ENCODE measurements at regions of chr18 and their contacts with region 1.

Region 1: DNA sequence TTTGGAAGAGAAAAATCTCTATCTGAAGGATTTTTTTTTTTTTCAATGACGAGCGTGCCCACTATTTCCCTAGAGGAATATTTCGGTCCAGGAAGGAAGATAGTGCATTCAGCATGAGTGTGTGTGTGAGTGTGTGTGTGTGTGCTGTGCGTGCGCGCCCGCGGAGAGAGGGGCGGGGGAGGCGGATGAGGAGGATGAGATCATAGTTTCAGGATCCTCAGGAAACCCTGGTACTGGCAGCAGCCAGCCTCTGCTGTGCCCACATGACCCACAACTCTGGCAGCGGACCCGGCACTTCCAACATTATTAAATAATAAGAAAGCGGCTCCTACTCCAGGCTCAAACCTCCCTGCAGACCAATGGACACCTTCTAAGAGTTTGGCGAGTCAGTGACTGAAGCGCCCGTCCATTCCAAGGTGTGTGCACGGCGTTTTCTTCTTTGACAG is 217.0 kb upstream of the DTNA start:
- DNase-seq: peak; percentile 77 to 90 (median 87)
- ATAC-seq: peak; percentile 89 to 90
- H3K4me3 ChIP-seq: peak overlapping the region; percentile 82
- H3K27ac ChIP-seq: peak overlapping the region; percentile 90
- H3K4me1 ChIP-seq: no peaks in the 10 kb centered on the region
- H3K27me3 ChIP-seq: no peaks in the 10 kb centered on the region

Region 2: DNA sequence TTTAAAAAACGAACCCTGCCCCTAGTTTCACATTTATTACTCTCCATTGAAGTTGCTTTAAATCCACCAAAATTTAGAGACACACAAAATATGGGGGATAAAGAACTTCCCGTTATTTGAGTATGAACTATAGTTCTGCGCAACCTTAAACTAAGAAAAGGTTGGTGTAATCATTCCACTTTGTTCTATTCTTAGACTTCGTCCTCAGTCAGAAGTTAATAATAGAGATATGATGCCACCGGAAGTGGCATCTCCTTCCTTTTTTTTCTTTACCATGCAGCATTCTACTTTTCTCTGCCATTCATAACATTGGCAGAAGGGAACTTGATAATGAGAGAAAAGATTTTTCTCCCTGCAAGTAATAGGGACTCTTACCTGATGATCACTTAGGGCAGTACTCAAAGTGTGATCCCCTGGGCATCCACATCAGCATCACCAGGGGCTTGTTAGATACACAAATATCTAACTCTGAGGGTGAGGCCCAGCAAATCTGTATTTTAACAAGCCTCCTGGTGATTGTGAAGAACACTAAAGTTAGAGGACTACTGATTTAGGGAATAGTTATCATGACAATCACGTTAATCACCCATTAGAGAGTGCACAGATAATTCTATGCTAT is 69.2 kb after region 1 on chr18:
- intact Hi-C with region 1: no loop called
- DNase-seq: no peak
- ATAC-seq: peak; percentile 56 to 59
- H3K4me3 ChIP-seq: no peak overlapping the region
- H3K27ac ChIP-seq: peak overlapping the region; percentile 43
- H3K4me1 ChIP-seq: no peaks in the 10 kb centered on the region
- H3K27me3 ChIP-seq: no peaks in the 10 kb centered on the region

Region 3: GRCh38 chr18:34647251-34647650 is 154.1 kb after region 1 on chr18:
- intact Hi-C with region 1: loop called in 1 of 4 experiments (anchors 5 kb)
- DNase-seq: no peak
- ATAC-seq: no peak
- H3K4me3 ChIP-seq: no peak overlapping the region
- H3K27ac ChIP-seq: no peak overlapping the region
- H3K4me1 ChIP-seq: no peaks in the 10 kb centered on the region
- H3K27me3 ChIP-seq: no peaks in the 10 kb centered on the region

Measured in right cardiac atrium (tissue), 5 donors.